ENCODE measurements at regions of chr1 and their contacts with region 1.

Region 1: DNA sequence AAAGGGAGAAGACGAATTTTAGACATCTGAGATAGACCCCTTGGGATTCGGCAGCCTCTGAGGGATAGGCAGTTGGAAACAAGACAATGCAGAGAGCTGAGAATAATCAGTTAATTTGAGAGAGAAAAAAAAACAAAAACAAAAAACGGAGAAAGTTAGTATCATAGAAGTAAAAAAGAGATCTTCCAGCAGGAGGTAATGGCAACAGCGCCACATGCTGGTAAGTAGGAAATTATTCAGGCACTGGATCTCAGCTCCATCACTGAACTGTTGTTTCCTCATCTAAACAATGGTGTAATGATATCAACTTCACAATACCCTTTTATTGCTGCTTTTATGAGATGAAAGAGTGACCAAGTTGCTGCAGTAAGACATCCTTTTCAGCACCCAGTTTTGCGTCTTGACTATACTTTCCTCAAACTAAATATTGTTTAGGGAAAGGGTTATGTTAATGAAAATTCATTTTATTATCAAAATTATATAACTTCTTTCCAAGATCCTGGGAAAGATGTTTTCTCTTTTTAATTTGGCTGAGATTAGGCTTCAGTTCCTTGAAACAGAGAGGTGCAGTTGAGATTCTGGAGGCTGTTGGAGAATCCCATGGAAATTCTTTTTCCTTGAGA is 91.4 kb upstream of the KCNA3 start:
- DNase-seq: peak; percentile 25 to 63 (median 42)
- H3K4me3 ChIP-seq: no peak overlapping the region
- H3K27ac ChIP-seq: no peak overlapping the region
- H3K4me1 ChIP-seq: no peaks in the 10 kb centered on the region
- H3K27me3 ChIP-seq: peaks cover 7% of the 10 kb centered on the region
- CTCF ChIP-seq: peak; percentile 64 to 90 (median 78)
- POLR2A ChIP-seq: no peak

Region 2: GRCh38 chr1:110524311-110525251 is 241.6 kb before region 1 on chr1:
- intact Hi-C with region 1: loop called (anchors 5 to 10 kb)
- DNase-seq: peak; percentile 26 to 64 (median 35)
- H3K4me3 ChIP-seq: no peak overlapping the region
- H3K27ac ChIP-seq: no peak overlapping the region
- H3K4me1 ChIP-seq: no peaks in the 10 kb centered on the region
- H3K27me3 ChIP-seq: peaks cover 6% of the 10 kb centered on the region
- CTCF ChIP-seq: peak; percentile 26 to 70 (median 62)
- POLR2A ChIP-seq: no peak

Region 3: GRCh38 chr1:110630839-110631663 is 135.1 kb before region 1 on chr1:
- intact Hi-C with region 1: loop called in 1 of 2 experiments (anchors 2 kb)
- DNase-seq: peak; percentile 72 to 86 (median 77)
- H3K4me3 ChIP-seq: no peak overlapping the region
- H3K27ac ChIP-seq: no peak overlapping the region
- H3K4me1 ChIP-seq: no peaks in the 10 kb centered on the region
- H3K27me3 ChIP-seq: peaks cover 7% of the 10 kb centered on the region
- CTCF ChIP-seq: peak; percentile 65 to 86 (median 80)
- POLR2A ChIP-seq: no peak